Tibial artery (tissue), 4 donors: ENCODE measurements at regions of chr21 and their contacts with region 1.

Region 1: DNA sequence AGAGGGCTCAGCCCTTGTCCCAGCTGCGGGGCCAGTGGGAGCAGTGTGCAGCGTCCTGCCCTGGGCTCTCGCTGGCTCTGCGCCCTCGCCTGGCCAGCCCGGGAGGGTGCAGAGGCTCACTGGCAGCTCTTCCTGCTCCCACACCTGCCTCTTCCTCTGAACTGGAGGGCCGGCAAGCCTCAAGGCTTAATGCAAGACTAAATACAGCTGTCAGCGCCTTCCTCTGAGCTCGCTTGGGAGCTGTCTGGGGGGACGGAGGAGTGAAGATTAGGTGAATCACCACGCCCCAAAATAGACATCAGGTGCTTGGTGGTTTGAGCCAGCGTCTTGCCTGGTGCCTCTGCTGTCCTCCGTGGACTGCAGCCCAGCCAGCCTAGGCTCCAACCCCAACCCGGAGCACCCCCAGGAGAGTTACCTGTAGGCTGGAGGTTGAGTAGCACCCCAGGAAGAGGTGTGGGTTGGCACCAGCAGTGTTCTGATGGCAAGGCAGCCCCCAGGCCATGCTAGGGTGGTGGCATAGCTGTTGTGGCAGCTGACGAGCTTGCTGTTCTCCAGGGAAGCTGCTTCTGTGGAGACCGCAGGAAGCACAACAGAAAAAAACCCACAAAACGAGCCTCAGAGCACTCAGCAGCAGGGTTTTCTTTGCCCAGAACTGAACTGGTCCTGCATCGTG is 36.9 kb downstream of the UMODL1 start:
- DNase-seq: peak in 1 of 2 donors; percentile 39
- H3K4me3 ChIP-seq: no peak overlapping the region
- H3K27ac ChIP-seq: no peak overlapping the region
- H3K4me1 ChIP-seq: peaks cover 0 to 15% (median 10%) of the 10 kb centered on the region in 4 donors
- H3K27me3 ChIP-seq: peaks cover 0 to 8% of the 10 kb centered on the region in 2 donors
- CTCF ChIP-seq: peak; percentile 75 to 80

Region 2: DNA sequence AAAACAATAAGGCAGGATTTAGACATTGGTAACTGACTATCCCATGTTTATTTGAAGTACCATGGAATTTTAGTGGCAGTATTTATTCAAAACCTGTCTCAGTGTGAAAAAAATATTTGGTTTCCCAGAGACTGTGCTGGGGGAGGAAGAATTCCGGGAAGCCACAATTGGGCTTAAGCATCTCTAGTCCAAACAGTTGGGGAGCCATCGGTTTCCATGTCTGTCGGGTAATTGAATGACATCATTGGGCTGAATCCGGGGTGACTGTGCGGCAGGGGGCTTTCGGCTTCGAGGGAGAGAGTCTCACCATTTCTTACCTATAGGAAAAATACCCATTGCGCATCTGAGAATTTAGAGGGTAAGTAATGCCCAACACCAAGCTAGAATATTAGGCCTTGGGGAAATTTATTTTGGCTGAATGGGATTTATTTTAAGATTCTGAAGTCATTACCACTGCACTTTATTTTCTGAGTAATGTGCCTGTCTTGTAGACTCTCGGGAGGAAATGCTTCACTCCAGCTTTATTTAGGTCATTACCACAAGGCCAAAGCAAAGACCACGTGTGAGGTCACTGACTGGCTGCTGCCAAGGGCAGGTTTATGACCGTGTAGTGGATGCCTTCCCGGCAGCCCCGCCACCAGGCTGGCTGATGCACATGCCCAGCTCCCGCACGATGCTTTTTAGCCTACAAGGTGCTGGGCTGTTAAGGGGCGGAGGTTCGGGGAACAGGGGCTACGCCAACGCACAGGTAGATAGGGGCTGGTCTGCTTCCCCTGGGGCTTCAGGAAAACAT is 60.0 kb before region 1 on chr21:
- intact Hi-C with region 1: loop called (anchors 10 kb)
- DNase-seq: peak; percentile 80 to 94
- H3K4me3 ChIP-seq: no peak overlapping the region
- H3K27ac ChIP-seq: peak overlapping the region; percentile 76 to 77
- H3K4me1 ChIP-seq: peaks cover 0 to 23% (median 12%) of the 10 kb centered on the region in 4 donors
- H3K27me3 ChIP-seq: no peaks in the 10 kb centered on the region
- CTCF ChIP-seq: peak in 1 of 2 experiments; percentile 28

Region 3: GRCh38 chr21:42187976-42188653 is 80.1 kb after region 1 on chr21:
- intact Hi-C with region 1: no loop called
- DNase-seq: peak in 1 of 2 donors; percentile 48
- H3K4me3 ChIP-seq: no peak overlapping the region
- H3K27ac ChIP-seq: no peak overlapping the region
- H3K4me1 ChIP-seq: peaks cover 0 to 5% (median 0%) of the 10 kb centered on the region in 4 donors
- H3K27me3 ChIP-seq: peaks cover 0 to 9% of the 10 kb centered on the region in 2 donors
- CTCF ChIP-seq: no peak

Region 4: GRCh38 chr21:42289926-42290325 is 181.9 kb after region 1 on chr21:
- intact Hi-C with region 1: no loop called
- DNase-seq: peak; percentile 67 to 78
- H3K4me3 ChIP-seq: no peak overlapping the region
- H3K27ac ChIP-seq: no peak overlapping the region
- H3K4me1 ChIP-seq: no peaks in the 10 kb centered on the region
- H3K27me3 ChIP-seq: peaks cover 0 to 11% of the 10 kb centered on the region in 2 donors
- CTCF ChIP-seq: no peak